H1 (cell line): ENCODE measurements at regions of chr16 and their contacts with region 1.

Region 1: DNA sequence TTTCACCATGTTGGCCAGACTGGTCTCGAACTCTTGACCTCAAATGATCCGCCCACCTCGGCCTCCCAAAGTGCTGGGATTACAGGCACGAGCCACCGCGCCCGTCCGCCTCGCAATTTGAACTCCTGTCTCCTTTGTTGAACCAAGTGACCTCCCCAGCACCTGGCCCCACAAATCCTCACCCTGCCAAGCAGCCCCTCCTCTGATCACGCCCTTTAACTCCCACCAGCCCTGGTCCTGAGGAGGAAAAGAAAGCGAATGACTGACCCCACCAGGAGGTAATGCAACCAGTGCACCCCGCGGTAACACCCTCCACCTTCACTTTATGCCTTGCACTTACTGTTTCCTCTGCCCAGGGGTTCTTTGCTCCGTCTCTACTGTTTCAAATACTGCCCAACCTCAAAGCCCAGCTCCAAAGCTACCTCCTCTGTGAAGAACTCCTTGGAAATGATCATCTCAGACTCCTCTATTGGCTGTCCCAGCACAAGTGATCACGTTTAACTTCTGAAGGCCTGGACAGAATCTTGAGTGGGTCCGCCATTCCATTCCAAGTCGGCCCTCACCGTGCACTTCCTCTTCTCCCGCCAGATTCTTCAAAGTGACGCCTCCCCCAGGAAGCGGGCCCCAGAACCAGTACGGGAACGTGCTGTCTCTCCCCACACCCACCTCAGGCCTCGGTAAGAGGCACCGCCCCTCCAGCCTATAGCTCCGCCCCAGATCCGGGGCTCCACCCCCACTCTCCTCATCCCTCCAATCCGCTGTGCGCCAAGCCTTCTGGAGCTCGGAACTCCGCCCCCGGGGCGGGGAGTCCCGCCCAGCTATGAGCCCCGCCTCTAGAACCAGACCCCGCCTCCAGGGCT is 4.4 kb downstream of the CD19 start:
- DNase-seq: peak; percentile 78 to 94
- H3K4me3 ChIP-seq: peak overlapping the region in 3 of 4 experiments; percentile 11 to 47 (median 19); a peak in 5 of 8 replicates
- H3K27ac ChIP-seq: no peak overlapping the region
- H3K4me1 ChIP-seq: no peaks in the 10 kb centered on the region; a peak in 1 of 7 replicates
- H3K27me3 ChIP-seq: no peaks in the 10 kb centered on the region
- CTCF ChIP-seq: no peak
- EP300 ChIP-seq: no peak
- POLR2A ChIP-seq: no peak
- RAD21 ChIP-seq: no peak

Region 2: DNA sequence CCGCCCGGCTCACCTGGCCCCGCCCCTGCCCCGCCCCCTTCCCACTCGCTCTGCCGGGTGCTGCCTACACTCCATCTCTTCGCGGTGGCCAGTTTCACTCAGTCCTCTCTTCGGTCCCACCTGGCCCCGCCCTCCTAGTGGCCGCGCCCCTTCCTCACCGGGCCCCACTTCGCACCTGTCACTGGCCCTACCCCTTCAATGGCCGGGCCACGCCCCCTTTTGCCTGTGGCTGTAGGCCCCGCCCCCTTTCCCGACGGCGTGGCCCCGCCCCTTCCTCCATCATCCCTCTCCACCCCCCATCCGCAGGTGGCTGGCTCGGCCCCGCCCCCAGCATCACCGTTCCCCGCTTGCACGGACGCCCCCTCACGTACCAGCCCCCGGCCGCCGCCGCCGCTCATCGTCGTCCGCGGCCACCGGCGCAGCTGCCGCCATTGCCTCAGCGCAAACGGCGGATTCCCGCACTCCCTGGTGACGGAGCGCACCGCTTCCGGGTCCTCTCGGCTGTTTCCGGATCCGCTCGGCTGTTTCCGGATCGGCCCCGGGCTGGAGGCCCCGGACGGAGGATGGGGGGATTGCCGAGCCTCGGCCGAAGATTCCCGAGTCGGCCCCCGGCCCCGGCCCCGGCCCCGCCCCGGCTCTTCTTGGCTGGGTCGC is 11.3 kb before region 1 on chr16 and contains the start of gene RABEP2:
- CTCF ChIA-PET with region 1: interaction called, 6 read pairs
- POLR2A ChIA-PET with region 1: interaction called, 23 read pairs
- DNase-seq: peak; percentile 95 to 100
- H3K4me3 ChIP-seq: peak within 1 kb of the TSS; percentile 74 to 84 (median 79)
- H3K27ac ChIP-seq: peak within 1 kb of the TSS; percentile 90
- H3K4me1 ChIP-seq: peaks cover 0 to 6% (median 0%) of the 10 kb centered on the region in 4 experiments; a peak in 3 of 7 replicates
- H3K27me3 ChIP-seq: no peaks in the 10 kb centered on the region
- CTCF ChIP-seq: no peak
- EP300 ChIP-seq: no peak
- POLR2A ChIP-seq: no peak
- RAD21 ChIP-seq: no peak
- total RNA-seq, gene RABEP2: 13.3 and 14.9 TPM in 2 replicates

Region 3: GRCh38 chr16:28950648-28951409 is 14.7 kb after region 1 on chr16 and contains the start of gene NFATC2IP:
- CTCF ChIA-PET with region 1: interaction called, 32 read pairs
- POLR2A ChIA-PET with region 1: interaction called, 8 read pairs
- DNase-seq: peak; percentile 99
- H3K4me3 ChIP-seq: peak within 1 kb of the TSS; percentile 76 to 98 (median 77)
- H3K27ac ChIP-seq: no peak within 1 kb of the TSS; the same call in 1 of the 2 replicates
- H3K4me1 ChIP-seq: peaks cover 0 to 7% (median under 1%) of the 10 kb centered on the region in 4 experiments; a peak in 3 of 7 replicates
- H3K27me3 ChIP-seq: no peaks in the 10 kb centered on the region
- CTCF ChIP-seq: no peak
- EP300 ChIP-seq: no peak
- POLR2A ChIP-seq: peak in 1 of 2 experiments; percentile 47; a peak in 1 of 3 replicates
- RAD21 ChIP-seq: no peak
- total RNA-seq, gene NFATC2IP: 54.4 and 56.0 TPM in 2 replicates